ENCODE measurements at regions of chr7 and their contacts with region 1.

Region 1: GRCh38 chr7:16918288-16918895 is 36.6 kb upstream of the AGR3 start:
- DNase-seq: no peak
- ATAC-seq: no peak

Region 2: DNA sequence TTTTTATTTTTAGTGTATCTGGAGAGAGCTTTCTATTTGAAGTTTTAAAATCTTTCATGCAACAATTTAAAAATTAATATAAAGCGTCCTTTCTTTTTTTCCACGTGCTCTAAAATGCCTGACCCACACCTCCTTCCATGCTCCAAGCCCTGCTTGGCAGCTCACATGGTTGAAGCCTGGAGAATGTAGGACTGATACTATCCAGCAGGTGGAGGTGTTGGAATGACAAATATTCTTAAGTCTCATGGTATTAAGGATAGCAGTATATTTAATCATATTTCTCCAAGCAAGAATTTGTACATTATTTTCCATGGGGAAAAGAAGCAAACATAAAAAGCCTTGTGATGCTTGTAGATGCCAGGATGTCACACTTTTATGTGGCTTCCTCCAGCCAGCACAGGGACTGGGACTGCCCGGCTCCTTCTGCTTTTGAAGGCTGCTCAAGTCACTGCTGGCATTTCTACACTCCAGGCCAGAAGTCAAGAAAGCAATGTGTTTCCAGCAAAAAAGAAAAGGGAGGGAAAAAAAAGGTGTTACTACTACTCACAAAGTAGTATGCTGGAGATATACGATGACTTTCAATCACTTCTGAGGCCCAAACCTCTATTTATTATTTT is 222.7 kb before region 1 on chr7:
- intact Hi-C with region 1: loop called (anchors 5 kb)
- DNase-seq: no peak
- ATAC-seq: peak; percentile 79

Region 3: DNA sequence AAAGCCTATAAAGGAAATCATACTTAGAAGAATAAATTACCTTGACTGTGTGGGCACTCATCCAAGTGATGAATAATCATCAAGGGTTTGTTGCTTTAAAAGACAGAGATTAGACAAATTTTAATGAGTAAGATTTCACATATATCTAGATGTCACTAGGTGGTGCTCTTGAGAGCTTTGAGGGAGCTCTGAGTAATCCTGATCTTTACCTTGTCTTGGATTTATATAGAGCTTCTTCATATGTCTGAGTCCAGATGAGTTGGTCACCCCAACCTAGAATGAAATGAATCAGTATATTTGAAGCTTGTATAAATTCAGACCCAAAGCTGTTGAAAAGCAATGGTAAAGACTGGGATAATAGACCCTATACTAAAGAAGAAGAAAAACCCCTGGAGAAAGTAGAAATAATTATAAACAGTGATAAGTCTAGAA is 117.3 kb before region 1 on chr7:
- intact Hi-C with region 1: loop called (anchors 10 kb)
- DNase-seq: no peak
- ATAC-seq: no peak

Region 4: GRCh38 chr7:17274551-17275245 is 356.3 kb after region 1 on chr7:
- intact Hi-C with region 1: no loop called
- DNase-seq: no peak
- ATAC-seq: no peak